ENCODE measurements at regions of chr4 and their contacts with region 1.

Region 1: DNA sequence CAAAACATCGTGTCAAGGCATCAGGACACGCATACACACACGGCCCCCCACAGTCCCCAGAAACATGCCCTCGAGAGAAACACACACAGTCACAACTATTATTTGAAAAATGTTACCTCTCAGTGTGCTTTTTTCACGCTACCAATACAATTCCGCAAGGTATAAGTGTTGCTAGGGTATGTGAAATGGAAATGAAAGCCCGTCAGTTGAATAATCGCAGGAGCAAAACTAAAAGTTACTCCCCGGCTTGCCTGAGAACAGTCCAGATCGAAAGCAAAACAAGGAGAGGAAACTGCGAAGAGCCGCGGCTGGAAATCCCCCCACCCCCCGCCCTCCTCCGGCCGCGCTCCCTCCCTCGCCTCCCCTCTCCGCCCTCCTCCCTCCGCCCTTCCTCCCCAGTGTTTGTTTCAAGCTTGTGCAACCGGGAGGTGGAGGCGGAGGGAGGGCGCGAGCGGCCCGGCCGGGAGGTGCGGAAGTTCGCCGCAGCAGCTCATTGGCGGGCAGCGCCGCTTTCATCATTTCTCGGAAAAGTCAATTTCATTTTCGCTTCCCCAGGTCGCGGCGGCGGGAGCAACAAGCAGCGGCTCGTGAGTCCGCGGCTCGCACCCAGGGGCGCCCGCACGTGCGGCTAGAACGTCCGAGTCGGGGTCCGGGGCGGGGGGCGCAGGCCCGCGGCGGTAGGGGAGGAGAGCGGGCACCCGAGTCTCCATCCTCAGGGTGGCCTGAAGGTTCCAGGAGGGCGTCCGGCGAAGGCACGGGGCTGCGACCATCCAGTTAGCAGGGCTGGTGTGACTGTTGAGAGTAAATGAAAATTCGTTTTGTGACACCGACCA is at the start of gene IRF2:
- DNase-seq: peak; percentile 98
- H3K4me3 Mint-ChIP-seq: peak within 1 kb of the TSS; percentile 99
- H3K27ac Mint-ChIP-seq: peak within 1 kb of the TSS; percentile 98
- H3K4me1 Mint-ChIP-seq: peaks cover 52% of the 10 kb centered on the region
- H3K27me3 Mint-ChIP-seq: no peaks in the 10 kb centered on the region
- total RNA-seq, gene IRF2: 48.7 and 50.0 TPM in 2 replicates

Region 2: DNA sequence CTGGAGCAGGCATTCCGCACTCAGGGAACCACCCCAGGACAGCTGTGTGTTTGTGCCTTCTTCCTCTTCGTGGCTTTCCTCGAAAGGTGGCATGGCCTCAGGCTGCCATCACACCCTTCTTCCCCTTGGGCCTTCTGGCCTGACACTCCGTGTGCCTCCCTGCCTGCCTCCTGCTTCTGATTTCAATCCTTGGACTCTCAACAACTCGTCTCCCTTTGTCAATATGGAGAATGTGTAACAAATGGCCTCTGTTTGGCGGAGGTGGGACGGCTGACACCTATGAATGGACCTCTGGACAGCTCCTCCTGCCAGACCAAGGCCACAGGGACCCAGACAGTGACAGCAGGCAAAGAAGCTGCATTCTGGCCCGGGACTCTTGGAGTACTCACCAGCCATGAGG is 393.8 kb before region 1 on chr4:
- intact Hi-C with region 1: no loop called
- DNase-seq: no peak
- H3K4me3 Mint-ChIP-seq: no peak overlapping the region
- H3K27ac Mint-ChIP-seq: no peak overlapping the region
- H3K4me1 Mint-ChIP-seq: no peaks in the 10 kb centered on the region
- H3K27me3 Mint-ChIP-seq: peaks cover 18% of the 10 kb centered on the region

Region 3: GRCh38 chr4:184287697-184288255 is 186.7 kb before region 1 on chr4:
- intact Hi-C with region 1: loop called (anchors 1 kb)
- DNase-seq: peak; percentile 64
- H3K4me3 Mint-ChIP-seq: peak overlapping the region; percentile 57
- H3K27ac Mint-ChIP-seq: peak overlapping the region; percentile 89
- H3K4me1 Mint-ChIP-seq: peaks cover 45% of the 10 kb centered on the region
- H3K27me3 Mint-ChIP-seq: no peaks in the 10 kb centered on the region

Region 4: DNA sequence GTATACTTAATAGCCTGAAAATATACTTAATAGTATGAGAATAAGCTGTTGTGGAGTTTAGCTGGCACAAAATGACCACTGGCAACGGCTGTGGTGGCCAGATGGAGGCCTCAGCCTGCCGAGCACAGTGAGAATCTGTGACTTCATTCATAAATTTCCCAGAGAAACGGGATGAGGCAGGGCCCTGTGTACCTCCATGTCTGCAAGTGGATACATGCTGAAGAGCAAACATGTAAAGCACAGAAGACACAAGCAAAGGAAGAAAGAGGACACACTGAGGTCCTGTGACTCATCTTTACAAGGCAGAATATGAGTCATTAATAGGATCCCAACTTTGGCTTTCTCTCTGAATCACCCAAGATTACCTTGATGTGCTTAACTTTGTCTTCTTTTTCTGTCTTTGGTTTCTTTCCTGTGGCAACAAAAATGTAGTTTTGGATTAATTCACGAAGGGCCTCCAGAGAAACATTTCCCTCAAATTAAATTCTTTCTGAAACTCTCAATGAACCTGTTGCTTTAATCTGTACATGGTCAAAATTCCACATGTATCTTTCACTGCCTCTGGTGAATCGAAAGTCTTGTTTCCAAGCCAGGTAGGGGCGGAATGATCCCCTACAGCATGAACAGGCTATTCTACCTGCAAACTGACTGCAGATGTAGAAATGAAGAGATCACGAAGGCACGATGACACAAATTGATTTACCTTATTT is 56.5 kb before region 1 on chr4:
- intact Hi-C with region 1: loop called (anchors 1 kb)
- DNase-seq: peak; percentile 77
- H3K4me3 Mint-ChIP-seq: peak overlapping the region; percentile 56
- H3K27ac Mint-ChIP-seq: peak overlapping the region; percentile 86
- H3K4me1 Mint-ChIP-seq: peaks cover 68% of the 10 kb centered on the region
- H3K27me3 Mint-ChIP-seq: no peaks in the 10 kb centered on the region

Region 5: GRCh38 chr4:184514121-184514988 is 39.9 kb after region 1 on chr4:
- intact Hi-C with region 1: loop called (anchors 1 kb)
- DNase-seq: peak; percentile 84
- H3K4me3 Mint-ChIP-seq: peak overlapping the region; percentile 65
- H3K27ac Mint-ChIP-seq: peak overlapping the region; percentile 84
- H3K4me1 Mint-ChIP-seq: peaks cover 40% of the 10 kb centered on the region
- H3K27me3 Mint-ChIP-seq: no peaks in the 10 kb centered on the region

Region 6: GRCh38 chr4:184575306-184575705 is 100.8 kb after region 1 on chr4:
- intact Hi-C with region 1: loop called (anchors 1 kb)
- DNase-seq: no peak
- H3K4me3 Mint-ChIP-seq: no peak overlapping the region
- H3K27ac Mint-ChIP-seq: peak overlapping the region; percentile 77
- H3K4me1 Mint-ChIP-seq: peaks cover 14% of the 10 kb centered on the region
- H3K27me3 Mint-ChIP-seq: no peaks in the 10 kb centered on the region

Region 7: DNA sequence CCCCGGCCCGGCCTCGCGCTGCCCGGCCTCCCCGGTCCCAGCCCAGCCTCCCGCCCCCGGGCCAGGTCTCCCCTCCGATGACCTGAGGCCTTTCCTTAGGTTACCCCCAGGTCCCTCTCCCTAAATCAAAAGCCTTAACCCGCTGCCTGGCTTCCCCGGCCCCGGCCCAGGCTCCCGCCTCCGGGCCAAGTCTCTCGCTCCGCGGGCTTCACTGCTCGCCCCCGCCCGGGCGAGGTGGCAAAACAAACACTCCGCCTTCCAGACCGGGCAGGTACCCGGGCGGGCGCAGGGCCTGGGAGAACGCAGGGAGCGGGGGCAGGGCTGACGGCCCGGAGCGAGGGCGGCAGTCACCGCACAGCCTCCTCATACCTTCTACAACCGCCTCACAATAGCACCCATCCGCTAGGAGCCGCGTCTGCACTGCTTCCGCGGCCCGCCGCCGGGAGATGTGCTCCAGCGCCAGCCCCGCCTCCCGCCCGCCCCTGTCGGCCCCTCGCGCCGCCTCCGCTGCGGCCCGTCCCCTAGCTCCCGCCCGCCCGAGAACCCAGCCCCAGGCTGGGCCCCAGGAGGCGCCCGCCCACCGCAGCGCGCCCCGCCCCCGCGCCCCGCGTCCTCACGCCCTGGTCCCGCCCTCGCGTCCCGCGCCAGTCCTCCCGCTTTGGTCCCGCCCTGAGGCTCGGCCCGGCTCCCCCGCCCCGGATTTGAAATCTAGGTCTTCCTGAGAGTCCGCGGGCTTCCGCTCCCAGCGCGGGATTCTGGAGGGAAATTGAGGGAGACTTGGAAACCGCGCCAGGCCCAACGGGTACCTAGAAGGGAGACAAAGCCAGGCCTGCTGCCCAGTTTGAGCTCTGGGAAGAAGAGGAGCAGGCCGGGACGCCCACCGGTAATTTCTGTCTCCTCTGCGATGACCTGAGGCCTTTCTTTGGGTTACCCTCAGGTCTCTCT is 174.8 kb after region 1 on chr4 and contains the starts of genes CASP3 and PRIMPOL:
- intact Hi-C with region 1: loop called (anchors 1 kb)
- DNase-seq: peak; percentile 99
- H3K4me3 Mint-ChIP-seq: peak within 1 kb of the TSS; percentile 99
- H3K27ac Mint-ChIP-seq: peak within 1 kb of the TSS; percentile 92
- H3K4me1 Mint-ChIP-seq: peaks cover 51% of the 10 kb centered on the region
- H3K27me3 Mint-ChIP-seq: no peaks in the 10 kb centered on the region
- total RNA-seq, gene CASP3: 84.8 and 89.8 TPM in 2 replicates
- total RNA-seq, gene PRIMPOL: 14.7 and 17.6 TPM in 2 replicates

Region 8: GRCh38 chr4:184983672-184984356 is 509.3 kb after region 1 on chr4:
- intact Hi-C with region 1: no loop called
- DNase-seq: peak; percentile 83
- H3K4me3 Mint-ChIP-seq: no peak overlapping the region
- H3K27ac Mint-ChIP-seq: no peak overlapping the region
- H3K4me1 Mint-ChIP-seq: peaks cover 7% of the 10 kb centered on the region
- H3K27me3 Mint-ChIP-seq: peaks cover 9% of the 10 kb centered on the region